Activated T-helper 2 cell treated with anti-CD3 and anti-CD28 coated beads, Interferon-gamma antibody, Interleukin-2, Interleukin-4, amounts not matched to agents 10 μg/mL and 5 μg/mL and 100 μg/mL, durations not matched to agents 14 hours and 24 hours and 36 hours (primary cell): ENCODE measurements at regions of chr1 and their contacts with region 1.

Region 1: DNA sequence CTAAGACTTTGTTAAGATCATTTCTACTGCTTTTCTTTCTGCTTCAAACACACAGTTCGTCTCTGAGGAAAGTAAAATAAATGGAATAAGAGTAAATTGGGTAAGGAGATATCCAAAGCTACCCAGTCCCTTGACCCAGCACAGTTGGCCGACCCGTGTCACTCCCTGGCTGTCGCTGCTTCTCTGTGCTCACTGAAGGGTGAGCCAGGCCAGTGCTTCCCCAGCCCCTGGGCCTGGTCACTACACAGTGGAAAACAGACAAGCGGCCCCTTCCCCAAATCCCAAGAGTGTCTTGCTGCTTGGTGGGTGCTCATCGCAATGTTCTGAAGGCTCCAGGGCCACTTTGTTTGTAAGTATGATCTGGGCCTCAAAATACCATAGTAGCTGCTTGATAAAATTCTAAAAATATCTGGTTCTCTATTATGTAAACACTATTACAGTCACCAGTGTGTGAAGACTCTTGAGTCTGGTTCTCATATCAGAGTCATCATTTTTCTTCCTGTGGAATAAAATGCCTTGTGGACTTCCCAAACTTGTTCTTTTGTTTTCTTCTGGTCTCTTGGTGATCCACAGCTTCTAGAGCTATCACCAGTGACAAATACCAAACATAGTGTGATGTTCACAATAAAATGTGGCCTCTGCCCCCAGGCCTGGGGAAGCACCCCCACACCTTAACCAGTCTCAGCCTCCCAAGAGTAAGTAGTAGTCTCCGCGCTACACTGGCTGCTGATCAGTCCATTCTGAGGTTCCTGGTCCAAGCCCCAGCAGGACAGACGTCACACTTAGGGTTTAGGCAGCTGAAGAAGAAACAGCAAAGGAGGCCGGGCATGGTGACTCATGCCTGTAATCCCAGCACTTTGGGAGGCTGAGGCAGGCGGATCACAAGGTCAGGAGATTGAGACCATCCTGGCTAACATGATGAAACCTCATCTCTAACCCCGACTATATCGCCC is 106.2 kb downstream of the DHRS3 start:
- DNase-seq: no peak
- H3K4me3 Mint-ChIP-seq: peak overlapping the region; percentile 58
- H3K27ac Mint-ChIP-seq: peak overlapping the region; percentile 99
- H3K4me1 Mint-ChIP-seq: peaks cover 41% of the 10 kb centered on the region
- H3K27me3 Mint-ChIP-seq: no peaks in the 10 kb centered on the region

Region 2: GRCh38 chr1:12384836-12385456 is 126.8 kb before region 1 on chr1:
- intact Hi-C with region 1: loop called (anchors 2 kb)
- DNase-seq: peak; percentile 22
- H3K4me3 Mint-ChIP-seq: no peak overlapping the region
- H3K27ac Mint-ChIP-seq: peak overlapping the region; percentile 36
- H3K4me1 Mint-ChIP-seq: peaks cover 42% of the 10 kb centered on the region
- H3K27me3 Mint-ChIP-seq: no peaks in the 10 kb centered on the region

Region 3: DNA sequence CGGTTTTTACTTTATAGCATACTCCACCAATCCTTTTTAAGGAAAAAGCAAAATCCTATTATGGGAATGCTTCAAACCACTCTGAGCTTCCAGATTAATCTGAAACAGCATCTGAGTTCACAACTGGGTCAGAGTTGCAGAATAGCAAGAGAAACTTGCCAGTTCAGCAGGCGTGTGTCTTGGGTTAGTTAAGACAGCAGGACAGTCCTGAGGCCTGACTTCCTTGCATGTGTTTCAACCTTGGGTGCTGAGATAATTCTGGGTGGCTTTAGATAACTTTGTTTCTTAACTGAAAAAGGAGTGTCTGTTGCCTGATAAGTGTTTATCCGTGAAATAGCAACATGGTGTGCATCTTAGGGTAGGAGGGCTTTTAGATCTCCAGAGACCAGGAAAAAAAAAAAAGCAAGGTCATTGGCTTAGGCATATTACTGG is 63.0 kb before region 1 on chr1:
- intact Hi-C with region 1: loop called (anchors 1 kb)
- DNase-seq: no peak
- H3K4me3 Mint-ChIP-seq: peak overlapping the region; percentile 60
- H3K27ac Mint-ChIP-seq: peak overlapping the region; percentile 96
- H3K4me1 Mint-ChIP-seq: peaks cover 72% of the 10 kb centered on the region
- H3K27me3 Mint-ChIP-seq: peaks cover 2% of the 10 kb centered on the region

Region 4: DNA sequence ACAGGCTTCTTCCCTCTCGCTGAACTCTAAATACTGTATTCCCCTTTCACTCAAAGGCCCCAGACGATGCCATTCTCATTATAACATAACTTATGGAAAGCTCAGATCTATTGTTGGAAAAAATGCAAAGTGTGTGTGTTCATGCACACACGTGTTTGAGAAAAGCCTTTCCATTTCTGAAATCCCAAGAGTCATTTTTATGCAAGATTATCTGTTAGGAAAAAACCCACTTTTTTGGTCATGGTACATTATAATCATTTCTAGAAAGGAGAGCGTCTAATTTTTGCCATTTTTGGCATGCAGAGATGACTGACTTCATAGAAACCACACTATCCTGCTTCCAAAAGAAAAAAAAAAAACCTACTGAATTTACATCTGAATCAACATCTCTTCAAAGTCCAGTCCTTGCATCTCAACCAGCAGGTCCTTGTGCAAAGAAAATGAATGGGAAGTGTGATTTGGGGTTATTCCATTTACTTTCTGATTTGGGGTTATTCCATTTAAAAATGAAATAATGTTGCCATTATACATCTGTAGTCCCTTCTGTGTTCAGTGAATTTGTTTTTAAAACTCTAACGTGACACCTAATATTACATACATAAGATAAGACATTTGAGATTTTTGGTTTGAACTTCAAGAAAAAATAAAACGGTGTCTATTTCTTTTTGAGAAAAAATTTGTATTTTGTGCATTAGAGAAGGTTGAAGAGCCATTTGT is 44.1 kb before region 1 on chr1:
- intact Hi-C with region 1: loop called (anchors 1 kb)
- DNase-seq: no peak
- H3K4me3 Mint-ChIP-seq: peak overlapping the region; percentile 16
- H3K27ac Mint-ChIP-seq: peak overlapping the region; percentile 93
- H3K4me1 Mint-ChIP-seq: peaks cover 32% of the 10 kb centered on the region
- H3K27me3 Mint-ChIP-seq: no peaks in the 10 kb centered on the region

Region 5: GRCh38 chr1:12472798-12473551 is 38.8 kb before region 1 on chr1:
- intact Hi-C with region 1: loop called (anchors 1 kb)
- DNase-seq: peak; percentile 60
- H3K4me3 Mint-ChIP-seq: peak overlapping the region; percentile 43
- H3K27ac Mint-ChIP-seq: peak overlapping the region; percentile 95
- H3K4me1 Mint-ChIP-seq: peaks cover 69% of the 10 kb centered on the region
- H3K27me3 Mint-ChIP-seq: no peaks in the 10 kb centered on the region

Region 6: GRCh38 chr1:12528021-12528852 is 16.4 kb after region 1 on chr1:
- intact Hi-C with region 1: loop called (anchors 2 kb)
- DNase-seq: no peak
- H3K4me3 Mint-ChIP-seq: no peak overlapping the region
- H3K27ac Mint-ChIP-seq: peak overlapping the region; percentile 6
- H3K4me1 Mint-ChIP-seq: peaks cover 33% of the 10 kb centered on the region
- H3K27me3 Mint-ChIP-seq: no peaks in the 10 kb centered on the region

Region 7: GRCh38 chr1:12604114-12604874 is 92.5 kb after region 1 on chr1:
- intact Hi-C with region 1: loop called (anchors 5 kb)
- DNase-seq: peak; percentile 47
- H3K4me3 Mint-ChIP-seq: peak overlapping the region; percentile 18
- H3K27ac Mint-ChIP-seq: peak overlapping the region; percentile 54
- H3K4me1 Mint-ChIP-seq: peaks cover 35% of the 10 kb centered on the region
- H3K27me3 Mint-ChIP-seq: no peaks in the 10 kb centered on the region